ENCODE measurements at regions of chr15 and their contacts with region 1.

Region 1: GRCh38 chr15:73697033-73697467 is 12.9 kb downstream of the CD276 start:
- DNase-seq: peak; percentile 94
- H3K4me3 ChIP-seq: no peak overlapping the region
- H3K27ac ChIP-seq: no peak overlapping the region
- H3K4me1 ChIP-seq: peaks cover 30% of the 10 kb centered on the region
- H3K27me3 ChIP-seq: no peaks in the 10 kb centered on the region
- CTCF ChIP-seq: no peak

Region 2: GRCh38 chr15:73305331-73306211 is 391.5 kb before region 1 on chr15:
- CTCF ChIA-PET with region 1: interaction called, 16 read pairs
- dilution Hi-C with region 1: no loop called
- in situ Hi-C with region 1: loop called in 1 of 2 experiments (anchors 25 kb)
- intact Hi-C with region 1: loop called (anchors 1 kb)
- DNase-seq: peak; percentile 75
- H3K4me3 ChIP-seq: no peak overlapping the region
- H3K27ac ChIP-seq: no peak overlapping the region
- H3K4me1 ChIP-seq: peaks cover 7% of the 10 kb centered on the region
- H3K27me3 ChIP-seq: no peaks in the 10 kb centered on the region
- CTCF ChIP-seq: peak; percentile 77 to 83

Region 3: DNA sequence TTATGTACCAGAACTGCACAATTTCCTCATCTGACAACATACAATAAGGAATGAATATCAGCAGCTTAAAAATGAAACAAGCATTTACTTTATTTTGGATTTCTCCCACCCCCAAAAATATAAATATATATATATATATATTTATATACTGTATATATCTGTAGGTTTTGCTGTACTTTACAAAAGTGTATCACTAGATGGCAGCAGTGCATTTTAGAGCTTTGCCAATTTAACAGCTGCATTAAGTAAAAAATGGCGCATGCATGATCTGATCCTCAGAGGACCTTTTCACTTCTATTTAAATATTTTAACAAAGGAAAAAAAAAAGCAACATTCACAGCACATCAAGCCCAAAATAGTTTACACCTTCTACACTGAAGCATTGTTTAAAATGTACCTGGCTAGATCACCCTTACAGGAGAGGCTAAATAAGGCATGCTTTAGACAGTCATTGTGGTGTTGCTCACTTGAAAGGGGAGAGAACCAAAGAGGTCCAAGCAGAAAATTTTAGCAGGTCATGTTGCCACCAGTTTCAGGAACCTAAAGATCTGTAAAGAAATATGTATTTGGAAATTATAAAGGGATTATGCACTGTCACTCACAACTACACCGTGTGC is 136.4 kb before region 1 on chr15:
- CTCF ChIA-PET with region 1: interaction called, 7 read pairs
- dilution Hi-C with region 1: no loop called
- in situ Hi-C with region 1: no loop called
- intact Hi-C with region 1: loop called (anchors 1 kb)
- DNase-seq: peak; percentile 51
- H3K4me3 ChIP-seq: no peak overlapping the region
- H3K27ac ChIP-seq: no peak overlapping the region
- H3K4me1 ChIP-seq: peaks cover 8% of the 10 kb centered on the region
- H3K27me3 ChIP-seq: no peaks in the 10 kb centered on the region
- CTCF ChIP-seq: peak; percentile 36 to 49

Region 4: GRCh38 chr15:73573572-73573971 is 123.5 kb before region 1 on chr15:
- CTCF ChIA-PET with region 1: no interaction called
- dilution Hi-C with region 1: loop called (anchors 5 kb)
- in situ Hi-C with region 1: loop called in 1 of 2 experiments (anchors 10 kb)
- intact Hi-C with region 1: loop called (anchors 5 kb)
- DNase-seq: peak; percentile 64
- H3K4me3 ChIP-seq: no peak overlapping the region
- H3K27ac ChIP-seq: no peak overlapping the region
- H3K4me1 ChIP-seq: peaks cover 48% of the 10 kb centered on the region
- H3K27me3 ChIP-seq: no peaks in the 10 kb centered on the region
- CTCF ChIP-seq: no peak

Region 5: DNA sequence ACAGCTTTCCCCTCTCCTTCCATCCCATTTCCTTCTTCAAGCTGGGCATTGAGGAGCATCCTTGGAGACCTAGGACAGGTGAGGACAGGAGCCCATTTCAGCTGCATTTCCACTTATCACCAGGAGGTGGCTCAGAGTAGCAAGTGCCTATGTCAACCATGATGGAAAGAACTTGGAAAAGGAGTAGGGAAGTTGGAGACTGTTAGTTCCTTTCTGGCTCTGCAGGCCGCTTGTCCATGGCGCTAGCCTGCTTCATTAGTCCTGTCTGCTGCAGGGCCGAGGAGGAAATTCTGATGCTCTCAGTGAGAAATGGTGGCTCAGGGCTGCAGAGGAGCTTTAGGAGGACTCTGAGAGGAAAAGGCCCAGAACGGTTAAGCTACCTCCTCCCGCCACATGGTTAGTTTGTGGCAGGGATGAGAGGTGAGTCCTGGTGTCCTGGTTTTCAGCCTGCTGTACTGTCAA is 19.9 kb before region 1 on chr15:
- CTCF ChIA-PET with region 1: interaction called, 7 read pairs
- dilution Hi-C with region 1: no loop called
- in situ Hi-C with region 1: no loop called
- intact Hi-C with region 1: loop called (anchors 1 kb)
- DNase-seq: peak; percentile 55
- H3K4me3 ChIP-seq: no peak overlapping the region
- H3K27ac ChIP-seq: no peak overlapping the region
- H3K4me1 ChIP-seq: no peaks in the 10 kb centered on the region
- H3K27me3 ChIP-seq: no peaks in the 10 kb centered on the region
- CTCF ChIP-seq: peak; percentile 88 to 89

Region 6: GRCh38 chr15:73753250-73754130 is 56.4 kb after region 1 on chr15 and contains the start of gene INSYN1:
- CTCF ChIA-PET with region 1: no interaction called
- dilution Hi-C with region 1: no loop called
- in situ Hi-C with region 1: no loop called
- intact Hi-C with region 1: no loop called
- DNase-seq: no peak
- H3K4me3 ChIP-seq: peak within 1 kb of the TSS in 2 of 3 experiments; percentile 32
- H3K27ac ChIP-seq: no peak within 1 kb of the TSS
- H3K4me1 ChIP-seq: peaks cover 7% of the 10 kb centered on the region
- H3K27me3 ChIP-seq: peaks cover 27% of the 10 kb centered on the region
- CTCF ChIP-seq: no peak
- total RNA-seq, gene INSYN1: 0.33 to 1.3 TPM

Region 7: DNA sequence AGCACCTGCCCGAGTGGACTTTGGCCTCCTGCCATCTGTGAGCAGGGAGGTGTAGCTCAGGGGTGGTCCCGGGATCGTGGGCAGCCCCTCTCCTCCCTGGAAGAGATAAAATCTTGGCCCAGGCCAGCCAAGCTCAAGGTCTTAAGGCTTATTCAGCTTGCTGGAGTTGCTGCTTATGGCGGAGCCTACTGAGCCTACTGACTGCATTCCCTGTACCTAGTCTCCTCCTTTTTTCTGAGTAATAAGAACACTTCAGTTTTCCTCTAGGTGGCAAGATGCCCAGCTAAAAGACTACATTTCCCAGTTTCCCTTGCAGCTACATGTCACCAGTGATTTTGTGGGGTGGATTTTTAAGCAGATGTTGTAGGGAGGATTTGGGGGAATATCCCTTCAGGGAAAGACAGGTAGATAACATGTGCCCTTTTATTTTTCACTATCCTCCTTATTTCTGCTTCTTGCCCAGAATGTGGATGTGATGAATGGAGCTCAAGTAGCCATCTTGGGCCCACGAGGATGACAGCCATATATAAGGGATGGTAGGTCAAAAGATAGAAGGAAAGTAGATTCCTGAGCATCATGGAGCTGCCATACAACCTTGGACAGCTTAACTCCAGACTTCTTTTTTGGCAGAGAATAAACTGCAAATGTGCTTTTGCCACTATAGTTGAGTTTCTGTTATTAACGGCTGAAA is 97.5 kb after region 1 on chr15:
- CTCF ChIA-PET with region 1: no interaction called
- dilution Hi-C with region 1: loop called (anchors 5 kb)
- in situ Hi-C with region 1: no loop called
- intact Hi-C with region 1: no loop called
- DNase-seq: peak; percentile 44
- H3K4me3 ChIP-seq: no peak overlapping the region
- H3K27ac ChIP-seq: no peak overlapping the region
- H3K4me1 ChIP-seq: no peaks in the 10 kb centered on the region
- H3K27me3 ChIP-seq: no peaks in the 10 kb centered on the region
- CTCF ChIP-seq: no peak

Region 8: GRCh38 chr15:73832657-73833056 is 135.6 kb after region 1 on chr15:
- CTCF ChIA-PET with region 1: no interaction called
- dilution Hi-C with region 1: no loop called
- in situ Hi-C with region 1: no loop called
- intact Hi-C with region 1: no loop called
- DNase-seq: no peak
- H3K4me3 ChIP-seq: no peak overlapping the region
- H3K27ac ChIP-seq: no peak overlapping the region
- H3K4me1 ChIP-seq: no peaks in the 10 kb centered on the region
- H3K27me3 ChIP-seq: no peaks in the 10 kb centered on the region
- CTCF ChIP-seq: no peak

Measured in mammary epithelial cell (primary cell).